Activated CD4-positive, alpha-beta T cell treated with anti-CD3 and anti-CD28 coated beads for 36 hours (primary cell): ENCODE measurements at regions of chr1 and their contacts with region 1.

Region 1: GRCh38 chr1:40668769-40669525 is 3.5 kb upstream of the RIMS3 start:
- DNase-seq: peak; percentile 92
- ATAC-seq: peak; percentile 58
- H3K4me3 Mint-ChIP-seq: peak overlapping the region; percentile 46
- H3K27ac Mint-ChIP-seq: no peak overlapping the region
- H3K4me1 Mint-ChIP-seq: peaks cover 14% of the 10 kb centered on the region
- H3K27me3 Mint-ChIP-seq: no peaks in the 10 kb centered on the region

Region 2: DNA sequence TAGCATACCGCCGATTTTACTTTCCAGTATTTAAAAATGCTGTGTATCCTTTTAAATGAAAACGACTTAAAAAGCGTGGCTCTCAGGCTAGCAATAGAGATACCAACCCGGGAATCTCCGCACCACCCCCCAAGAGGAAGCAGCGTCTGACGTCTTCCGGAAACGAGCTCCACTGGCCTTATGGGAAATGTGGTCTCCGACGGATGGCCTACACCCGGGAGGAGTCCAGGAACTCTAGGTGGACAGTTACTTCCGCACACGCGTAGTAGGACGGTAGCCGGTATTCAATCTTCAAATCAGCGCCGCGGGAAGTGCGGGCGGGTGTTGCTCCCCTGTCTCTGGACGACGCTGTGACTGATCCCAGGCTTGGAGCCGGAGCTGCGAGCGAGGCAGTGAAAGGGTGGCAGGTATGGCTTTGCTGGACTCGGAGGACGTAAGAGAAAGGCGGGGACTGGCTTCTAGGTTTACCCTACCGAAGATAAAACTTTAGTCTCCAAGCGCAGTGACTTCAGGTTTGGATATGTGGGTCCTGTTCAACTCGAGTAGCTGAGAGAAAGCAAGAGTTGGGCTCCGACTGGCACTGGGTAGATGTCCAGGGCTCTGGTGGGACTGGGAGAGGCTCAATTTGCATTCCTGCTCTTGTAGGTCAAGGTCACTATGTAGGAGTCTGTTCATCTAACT is 137.4 kb before region 1 on chr1 and contains the start of gene ZNF684:
- CTCF ChIA-PET with region 1: interaction called, 4 read pairs
- POLR2A ChIA-PET with region 1: no interaction called
- intact Hi-C with region 1: loop called (anchors 1 to 5 kb)
- DNase-seq: peak; percentile 91
- ATAC-seq: peak; percentile 98
- H3K4me3 Mint-ChIP-seq: peak within 1 kb of the TSS; percentile 88
- H3K27ac Mint-ChIP-seq: peak within 1 kb of the TSS; percentile 83
- H3K4me1 Mint-ChIP-seq: peaks cover 17% of the 10 kb centered on the region
- H3K27me3 Mint-ChIP-seq: peaks cover 6% of the 10 kb centered on the region
- total RNA-seq, gene ZNF684: 4.5 to 6.6 TPM

Region 3: DNA sequence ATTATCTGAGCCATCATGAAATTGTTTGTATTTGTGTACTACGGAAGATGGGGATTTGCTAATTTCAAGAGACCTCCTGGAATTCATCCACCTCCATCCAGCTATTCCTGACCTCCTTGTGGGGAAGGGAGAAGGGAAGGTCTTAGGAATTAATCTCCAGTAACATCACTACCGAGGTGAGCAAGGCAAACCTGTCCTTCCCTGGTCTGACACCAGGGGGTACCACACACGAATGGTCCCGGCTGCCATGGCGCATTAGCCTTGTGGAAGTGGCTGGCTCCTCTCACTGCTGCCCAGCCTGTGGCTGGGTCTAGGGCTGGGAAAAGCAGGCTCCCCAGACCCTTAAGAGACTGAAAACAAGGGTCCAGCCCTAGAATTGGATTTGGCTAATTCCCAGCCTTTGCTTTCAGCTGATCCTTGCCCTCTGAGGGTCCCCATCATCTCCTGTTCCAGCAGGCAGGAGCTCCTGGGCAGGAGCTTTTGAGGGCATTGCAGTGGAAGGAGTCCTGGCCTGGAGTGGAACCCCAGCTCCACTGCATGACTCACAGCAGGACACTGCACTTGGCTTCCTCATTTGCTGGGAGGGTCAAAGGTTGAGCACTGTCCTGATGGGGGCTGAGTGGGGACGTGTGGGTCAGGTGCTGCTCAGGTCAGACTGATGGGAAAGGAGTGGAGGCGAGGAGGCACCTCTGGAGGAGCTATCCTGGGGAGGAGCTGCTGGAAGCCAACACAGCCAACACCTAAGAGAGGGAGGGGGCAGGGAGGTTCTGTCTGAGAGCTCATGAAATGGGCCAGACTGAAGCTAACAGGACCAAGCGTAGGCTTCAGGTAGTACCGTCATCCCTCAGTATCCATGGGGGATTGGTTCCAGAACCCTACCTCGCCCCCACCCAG is 38.2 kb before region 1 on chr1:
- CTCF ChIA-PET with region 1: interaction called, 3 read pairs
- POLR2A ChIA-PET with region 1: no interaction called
- intact Hi-C with region 1: loop called in 1 of 2 experiments (anchors 1 kb)
- DNase-seq: peak; percentile 61
- ATAC-seq: no peak
- H3K4me3 Mint-ChIP-seq: no peak overlapping the region
- H3K27ac Mint-ChIP-seq: no peak overlapping the region
- H3K4me1 Mint-ChIP-seq: peaks cover 25% of the 10 kb centered on the region
- H3K27me3 Mint-ChIP-seq: no peaks in the 10 kb centered on the region

Region 4: DNA sequence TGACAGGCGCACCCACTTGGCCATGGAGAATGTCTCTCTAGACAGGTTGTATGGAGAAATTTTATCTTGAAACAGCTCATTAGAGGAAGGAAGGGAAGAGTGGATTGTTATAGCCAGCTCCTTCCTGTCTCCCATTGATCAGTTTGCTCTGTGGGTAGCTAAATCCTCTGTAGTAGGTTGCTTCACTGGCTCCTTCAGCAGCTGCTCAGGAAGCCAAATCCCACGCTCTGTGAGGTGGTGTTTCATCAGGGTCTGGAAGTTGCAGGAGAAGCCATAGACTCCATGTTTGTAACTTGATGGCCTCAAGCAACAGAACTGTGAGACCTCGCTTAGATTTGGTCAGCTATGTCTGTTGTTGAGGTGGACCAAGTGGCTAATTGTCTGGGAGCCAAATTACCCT is 15.7 kb after region 1 on chr1:
- CTCF ChIA-PET with region 1: interaction called, 21 read pairs
- POLR2A ChIA-PET with region 1: no interaction called
- intact Hi-C with region 1: no loop called
- DNase-seq: no peak
- ATAC-seq: no peak
- H3K4me3 Mint-ChIP-seq: no peak overlapping the region
- H3K27ac Mint-ChIP-seq: no peak overlapping the region
- H3K4me1 Mint-ChIP-seq: peaks cover under 1% of the 10 kb centered on the region
- H3K27me3 Mint-ChIP-seq: no peaks in the 10 kb centered on the region

Region 5: DNA sequence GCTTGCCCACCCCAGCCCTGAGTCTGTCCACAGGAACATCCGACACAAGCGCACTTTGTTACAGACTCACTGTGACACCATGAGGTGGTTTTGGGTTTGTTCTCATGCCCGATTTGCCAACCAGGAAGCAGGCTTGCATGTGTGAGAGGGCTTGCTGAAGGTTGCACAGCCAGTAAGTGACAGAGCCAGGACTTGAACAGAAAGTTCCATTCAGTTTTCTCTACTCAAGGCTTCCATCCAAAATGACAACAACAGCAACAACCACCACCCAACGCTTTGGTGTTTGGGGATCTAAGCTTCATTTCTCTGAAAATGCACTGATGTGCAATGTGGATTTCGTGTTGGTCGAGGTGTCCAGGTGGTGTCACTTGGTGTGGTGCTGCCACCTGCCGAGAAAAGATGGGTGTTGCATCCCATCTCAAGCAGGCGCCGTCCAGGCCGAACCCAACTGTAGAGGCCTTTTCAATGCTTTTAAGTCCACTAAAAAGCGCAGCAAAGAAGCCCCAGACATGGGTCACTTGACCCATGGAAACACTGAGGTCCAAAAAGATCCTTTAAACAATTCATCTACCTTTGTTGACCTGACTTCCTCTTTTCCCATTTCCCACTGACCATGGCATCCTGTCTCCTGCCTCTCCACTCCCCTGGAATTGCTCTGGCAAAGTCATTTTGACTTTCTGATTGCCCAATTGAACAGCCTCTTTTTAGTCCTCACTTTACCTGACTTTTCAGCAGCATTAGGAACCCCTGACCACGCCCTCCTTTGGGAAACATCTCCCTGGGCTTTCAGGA is 181.1 kb after region 1 on chr1:
- CTCF ChIA-PET with region 1: no interaction called
- POLR2A ChIA-PET with region 1: no interaction called
- intact Hi-C with region 1: loop called in 1 of 2 experiments (anchors 1 kb)
- DNase-seq: peak; percentile 88
- ATAC-seq: peak; percentile 90
- H3K4me3 Mint-ChIP-seq: no peak overlapping the region
- H3K27ac Mint-ChIP-seq: no peak overlapping the region
- H3K4me1 Mint-ChIP-seq: peaks cover 10% of the 10 kb centered on the region
- H3K27me3 Mint-ChIP-seq: no peaks in the 10 kb centered on the region